Activated CD4-positive, alpha-beta T cell treated with anti-CD3 and anti-CD28 coated beads, Interleukin-2, amount 10 ng/mL, durations not matched to agents 7 days and 5 days (primary cell): ENCODE measurements at regions of chr5 and their contacts with region 1.

Region 1: GRCh38 chr5:100659080-100659795 is 124.1 kb downstream of the FAM174A start:
- DNase-seq: no peak
- H3K4me3 Mint-ChIP-seq: no peak overlapping the region
- H3K27ac Mint-ChIP-seq: no peak overlapping the region
- H3K4me1 Mint-ChIP-seq: peaks cover 8% of the 10 kb centered on the region
- H3K27me3 Mint-ChIP-seq: peaks cover 1% of the 10 kb centered on the region

Region 2: DNA sequence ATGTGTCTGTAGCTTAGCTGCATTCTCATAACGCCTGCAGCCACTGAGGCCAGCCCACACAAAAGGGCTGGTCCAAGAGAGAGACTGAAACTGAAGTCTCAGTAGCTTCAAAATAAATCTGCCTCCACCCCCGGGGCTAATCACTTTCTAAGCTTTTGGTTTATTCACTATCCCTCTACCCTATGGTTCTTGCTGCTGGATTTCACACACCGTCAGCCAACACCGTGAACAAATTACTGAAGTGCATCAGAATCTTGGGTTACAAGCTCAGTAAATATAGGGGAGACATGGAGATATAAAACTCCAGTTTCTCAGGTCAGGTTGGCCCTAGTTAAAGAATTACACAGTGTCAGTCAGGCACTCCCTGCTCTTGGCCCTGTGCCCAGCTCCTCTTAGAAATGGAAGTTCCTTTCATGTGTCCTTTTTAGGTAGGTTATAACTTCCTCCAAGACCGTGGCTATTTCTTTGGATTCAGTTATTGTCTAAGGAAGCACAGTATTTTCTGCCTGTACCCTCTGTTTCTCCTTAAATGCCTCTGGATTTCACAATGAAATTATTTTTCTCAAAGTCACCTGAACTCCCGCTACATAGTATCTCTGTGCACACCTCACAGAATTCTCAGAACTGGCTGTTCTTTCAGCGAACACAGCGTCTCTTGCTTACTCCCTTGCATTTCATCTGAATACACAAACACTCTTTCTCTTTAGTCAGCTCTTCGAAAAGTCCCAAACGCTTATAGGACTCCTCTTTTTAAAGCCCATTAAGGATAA is 11.6 kb before region 1 on chr5:
- CTCF ChIA-PET with region 1: interaction called, 13 read pairs
- POLR2A ChIA-PET with region 1: no interaction called
- DNase-seq: no peak
- H3K4me3 Mint-ChIP-seq: no peak overlapping the region
- H3K27ac Mint-ChIP-seq: no peak overlapping the region
- H3K4me1 Mint-ChIP-seq: peaks cover 7% of the 10 kb centered on the region
- H3K27me3 Mint-ChIP-seq: peaks cover 4% of the 10 kb centered on the region